HEK293T (cell line): ENCODE measurements at regions of chr6 and their contacts with region 1.

Region 1: GRCh38 chr6:26156076-26156849 is 69.0 kb downstream of the HFE start:
- DNase-seq: peak; percentile 88

Region 2: DNA sequence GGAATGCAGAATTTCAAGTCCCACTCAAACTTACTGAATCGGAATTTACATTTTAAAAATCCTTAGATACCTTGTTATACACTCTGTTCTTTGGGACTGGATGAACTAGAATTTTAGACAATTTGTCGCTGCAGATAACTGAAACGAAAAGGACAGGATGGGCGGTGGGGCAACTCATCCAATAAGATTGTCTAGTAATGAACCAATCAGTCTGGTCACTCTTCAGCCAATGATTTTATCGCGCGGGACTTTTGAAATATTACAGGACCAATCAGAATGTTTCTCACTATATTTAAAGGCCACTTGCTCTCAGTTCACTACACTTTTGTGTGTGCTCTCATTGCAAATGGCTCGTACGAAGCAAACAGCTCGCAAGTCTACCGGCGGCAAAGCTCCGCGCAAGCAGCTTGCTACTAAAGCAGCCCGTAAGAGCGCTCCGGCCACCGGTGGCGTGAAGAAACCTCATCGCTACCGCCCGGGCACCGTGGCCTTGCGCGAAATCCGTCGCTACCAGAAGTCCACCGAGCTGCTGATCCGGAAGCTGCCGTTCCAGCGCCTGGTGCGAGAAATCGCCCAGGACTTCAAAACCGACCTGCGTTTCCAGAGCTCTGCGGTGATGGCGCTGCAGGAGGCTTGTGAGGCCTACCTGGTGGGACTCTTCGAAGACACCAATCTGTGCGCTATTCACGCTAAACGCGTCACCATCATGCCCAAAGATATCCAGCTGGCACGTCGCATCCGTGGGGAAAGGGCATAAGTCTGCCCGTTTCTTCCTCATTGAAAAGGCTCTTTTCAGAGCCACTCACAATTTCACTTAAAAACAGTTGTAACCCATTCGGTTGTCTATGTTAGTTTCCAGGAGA is 111.0 kb before region 1 on chr6:
- CTCF ChIA-PET with region 1: no interaction called
- POLR2A ChIA-PET with region 1: interaction called, 11 read pairs
- DNase-seq: no peak

Region 3: GRCh38 chr6:26129656-26130055 is 26.6 kb before region 1 on chr6:
- CTCF ChIA-PET with region 1: interaction called, 4 read pairs
- POLR2A ChIA-PET with region 1: interaction called, 822 read pairs
- DNase-seq: no peak

Region 4: GRCh38 chr6:26183581-26184366 is 27.5 kb after region 1 on chr6:
- CTCF ChIA-PET with region 1: no interaction called
- POLR2A ChIA-PET with region 1: interaction called, 118 read pairs
- DNase-seq: no peak

Region 5: GRCh38 chr6:26223650-26224546 is 67.6 kb after region 1 on chr6:
- CTCF ChIA-PET with region 1: interaction called, 4 read pairs
- POLR2A ChIA-PET with region 1: interaction called, 15 read pairs
- DNase-seq: peak; percentile 63

Region 6: GRCh38 chr6:27146706-27147505 is 990.6 kb after region 1 on chr6:
- CTCF ChIA-PET with region 1: no interaction called
- POLR2A ChIA-PET with region 1: interaction called, 50 read pairs
- DNase-seq: peak; percentile 84